ENCODE measurements at regions of chr12 and their contacts with region 1.

Region 1: DNA sequence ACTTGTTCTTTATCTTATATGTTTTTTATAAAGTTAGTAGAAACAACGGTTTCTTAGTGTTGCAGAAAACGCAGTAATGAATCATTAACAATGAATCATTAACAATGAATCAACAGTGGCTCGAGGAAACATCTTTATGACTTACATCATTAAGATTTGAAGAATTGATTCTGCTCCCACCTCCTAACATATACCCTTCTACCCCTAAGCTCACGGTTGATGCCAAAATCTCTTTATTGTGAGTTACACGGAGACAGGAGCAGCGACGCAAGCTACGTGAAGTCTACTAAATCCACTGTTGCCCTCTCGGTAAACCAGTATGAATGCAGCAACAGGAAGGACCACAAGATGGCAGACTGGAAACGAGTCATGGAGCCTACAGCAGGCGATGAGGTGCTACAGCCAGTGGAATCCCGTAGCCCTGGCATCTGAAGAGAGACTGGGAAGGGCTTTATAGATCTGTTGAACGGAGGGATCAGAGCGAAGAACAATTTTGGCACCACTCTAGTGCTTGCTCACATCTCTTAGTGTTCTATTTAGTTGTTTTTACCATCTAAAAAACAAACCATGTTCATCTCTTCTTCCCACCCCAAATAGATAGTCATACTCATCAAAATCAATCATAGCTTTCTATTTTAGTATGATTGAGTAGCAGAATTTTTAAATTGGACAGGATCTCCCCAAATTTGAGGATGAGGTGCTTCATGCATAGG is 332.7 kb downstream of the DUSP6 start:
- DNase-seq: peak; percentile 79
- ATAC-seq: peak; percentile 95
- H3K4me3 ChIP-seq: peak overlapping the region in 1 of 5 experiments; percentile 30
- H3K4me3 Mint-ChIP-seq: no peak overlapping the region
- H3K27ac ChIP-seq: no peak overlapping the region
- H3K27ac Mint-ChIP-seq: no peak overlapping the region
- H3K4me1 ChIP-seq: peaks cover 5% of the 10 kb centered on the region in 2 donors
- H3K4me1 Mint-ChIP-seq: peaks cover 3% of the 10 kb centered on the region
- H3K27me3 ChIP-seq: peaks cover 0 to 2% (median 0%) of the 10 kb centered on the region in 4 experiments
- H3K27me3 Mint-ChIP-seq: peaks cover 8% of the 10 kb centered on the region
- CTCF ChIP-seq: peak; percentile 81

Region 2: DNA sequence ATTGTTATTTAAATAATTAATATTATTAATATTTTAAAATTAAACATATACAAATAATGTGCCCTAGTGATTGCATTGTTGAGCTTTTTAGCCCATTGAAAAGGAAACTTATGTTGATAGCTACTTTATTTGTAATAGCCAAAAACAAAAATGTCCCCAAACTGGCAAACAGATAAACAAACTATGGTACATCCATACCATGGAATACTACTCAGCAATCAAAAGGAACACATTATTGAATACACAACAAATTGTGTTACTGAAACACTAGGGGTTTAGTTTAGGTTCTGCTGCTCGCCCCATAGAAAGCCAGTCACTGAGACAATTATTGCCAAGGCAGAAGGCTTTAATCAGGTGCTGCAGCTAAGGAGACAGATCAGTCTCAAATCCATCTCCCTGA is 199.6 kb before region 1 on chr12:
- CTCF ChIA-PET with region 1: no interaction called
- POLR2A ChIA-PET with region 1: no interaction called
- intact Hi-C with region 1: no loop called
- DNase-seq: no peak
- ATAC-seq: no peak
- H3K4me3 ChIP-seq: no peak overlapping the region
- H3K4me3 Mint-ChIP-seq: no peak overlapping the region
- H3K27ac ChIP-seq: no peak overlapping the region
- H3K27ac Mint-ChIP-seq: no peak overlapping the region
- H3K4me1 ChIP-seq: no peaks in the 10 kb centered on the region
- H3K4me1 Mint-ChIP-seq: no peaks in the 10 kb centered on the region
- H3K27me3 ChIP-seq: no peaks in the 10 kb centered on the region
- H3K27me3 Mint-ChIP-seq: no peaks in the 10 kb centered on the region
- CTCF ChIP-seq: no peak

Region 3: GRCh38 chr12:89029961-89030360 is 10.4 kb after region 1 on chr12:
- CTCF ChIA-PET with region 1: interaction called, 12 read pairs
- POLR2A ChIA-PET with region 1: no interaction called
- intact Hi-C with region 1: no loop called
- DNase-seq: no peak
- ATAC-seq: no peak
- H3K4me3 ChIP-seq: no peak overlapping the region
- H3K4me3 Mint-ChIP-seq: no peak overlapping the region
- H3K27ac ChIP-seq: no peak overlapping the region
- H3K27ac Mint-ChIP-seq: no peak overlapping the region
- H3K4me1 ChIP-seq: no peaks in the 10 kb centered on the region
- H3K4me1 Mint-ChIP-seq: no peaks in the 10 kb centered on the region
- H3K27me3 ChIP-seq: no peaks in the 10 kb centered on the region
- H3K27me3 Mint-ChIP-seq: peaks cover 18% of the 10 kb centered on the region
- CTCF ChIP-seq: no peak

Region 4: GRCh38 chr12:89051065-89051677 is 31.6 kb after region 1 on chr12:
- CTCF ChIA-PET with region 1: interaction called, 4 read pairs
- POLR2A ChIA-PET with region 1: no interaction called
- intact Hi-C with region 1: loop called (anchors 1 kb)
- DNase-seq: peak; percentile 74
- ATAC-seq: peak; percentile 53
- H3K4me3 ChIP-seq: no peak overlapping the region
- H3K4me3 Mint-ChIP-seq: no peak overlapping the region
- H3K27ac ChIP-seq: no peak overlapping the region
- H3K27ac Mint-ChIP-seq: no peak overlapping the region
- H3K4me1 ChIP-seq: no peaks in the 10 kb centered on the region
- H3K4me1 Mint-ChIP-seq: no peaks in the 10 kb centered on the region
- H3K27me3 ChIP-seq: no peaks in the 10 kb centered on the region
- H3K27me3 Mint-ChIP-seq: peaks cover 8% of the 10 kb centered on the region
- CTCF ChIP-seq: peak; percentile 88

Region 5: GRCh38 chr12:89461649-89462612 is 442.4 kb after region 1 on chr12:
- CTCF ChIA-PET with region 1: interaction called, 129 read pairs
- POLR2A ChIA-PET with region 1: no interaction called
- intact Hi-C with region 1: loop called (anchors 1 kb)
- DNase-seq: peak; percentile 74
- ATAC-seq: peak; percentile 73
- H3K4me3 ChIP-seq: no peak overlapping the region
- H3K4me3 Mint-ChIP-seq: no peak overlapping the region
- H3K27ac ChIP-seq: no peak overlapping the region
- H3K27ac Mint-ChIP-seq: no peak overlapping the region
- H3K4me1 ChIP-seq: peaks cover 5 to 7% of the 10 kb centered on the region in 2 donors
- H3K4me1 Mint-ChIP-seq: peaks cover 18% of the 10 kb centered on the region
- H3K27me3 ChIP-seq: no peaks in the 10 kb centered on the region
- H3K27me3 Mint-ChIP-seq: no peaks in the 10 kb centered on the region
- CTCF ChIP-seq: peak; percentile 83

Region 6: GRCh38 chr12:89524541-89525285 is 505.1 kb after region 1 on chr12 and contains the start of gene GALNT4:
- CTCF ChIA-PET with region 1: interaction called, 51 read pairs
- POLR2A ChIA-PET with region 1: no interaction called
- intact Hi-C with region 1: loop called (anchors 1 kb)
- DNase-seq: peak; percentile 91
- ATAC-seq: peak; percentile 76
- H3K4me3 ChIP-seq: peak within 1 kb of the TSS; percentile 72 to 98 (median 85)
- H3K4me3 Mint-ChIP-seq: peak within 1 kb of the TSS; percentile 96
- H3K27ac ChIP-seq: peak within 1 kb of the TSS; percentile 90 to 91
- H3K27ac Mint-ChIP-seq: peak within 1 kb of the TSS; percentile 93
- H3K4me1 ChIP-seq: peaks cover 32 to 40% of the 10 kb centered on the region in 2 donors
- H3K4me1 Mint-ChIP-seq: peaks cover 62% of the 10 kb centered on the region
- H3K27me3 ChIP-seq: no peaks in the 10 kb centered on the region
- H3K27me3 Mint-ChIP-seq: no peaks in the 10 kb centered on the region
- CTCF ChIP-seq: peak; percentile 73
- total RNA-seq, gene GALNT4: 8.3 and 10.3 TPM in 2 replicates

Region 7: DNA sequence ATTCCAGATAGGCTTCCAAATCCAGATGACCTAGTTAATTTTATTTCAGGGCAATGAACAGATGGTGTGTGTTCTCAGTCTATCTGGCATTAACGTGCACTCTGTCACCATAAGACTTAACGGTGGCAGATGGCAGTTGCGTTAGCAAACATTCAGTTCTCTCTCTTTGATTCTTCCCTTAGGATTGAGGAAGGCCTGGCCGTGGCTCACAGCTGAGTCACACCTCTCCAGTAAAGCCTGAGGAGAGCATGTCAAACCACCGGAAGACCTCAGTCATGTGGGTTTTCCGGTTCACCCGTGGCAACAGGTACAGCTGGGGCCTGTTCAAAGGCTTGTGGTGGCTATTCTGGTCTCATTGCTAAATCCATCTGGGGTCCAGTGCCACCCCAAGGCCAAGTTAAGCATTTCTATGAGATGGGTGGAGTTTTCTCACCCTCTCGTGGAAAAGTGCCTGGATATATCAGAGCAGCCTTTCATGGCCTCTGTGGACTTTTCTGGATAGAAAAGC is 1234.2 kb after region 1 on chr12:
- CTCF ChIA-PET with region 1: no interaction called
- POLR2A ChIA-PET with region 1: no interaction called
- intact Hi-C with region 1: loop called (anchors 5 kb)
- DNase-seq: peak; percentile 88
- ATAC-seq: peak; percentile 92
- H3K4me3 ChIP-seq: peak overlapping the region in 1 of 5 experiments; percentile 3
- H3K4me3 Mint-ChIP-seq: peak overlapping the region; percentile 86
- H3K27ac ChIP-seq: peak overlapping the region; percentile 60 to 64
- H3K27ac Mint-ChIP-seq: peak overlapping the region; percentile 97
- H3K4me1 ChIP-seq: peaks cover 22 to 27% of the 10 kb centered on the region in 2 donors
- H3K4me1 Mint-ChIP-seq: peaks cover 24% of the 10 kb centered on the region
- H3K27me3 ChIP-seq: no peaks in the 10 kb centered on the region
- H3K27me3 Mint-ChIP-seq: no peaks in the 10 kb centered on the region
- CTCF ChIP-seq: peak; percentile 66

Measured in B cell (primary cell).